ENCODE measurements at regions of chr14 and their contacts with region 1.

Region 1: GRCh38 chr14:101849125-101849524 is 87.6 kb downstream of the PPP2R5C start:
- DNase-seq: no peak
- H3K4me3 ChIP-seq: no peak overlapping the region
- H3K27ac ChIP-seq: no peak overlapping the region
- H3K27me3 ChIP-seq: no peaks in the 10 kb centered on the region
- CTCF ChIP-seq: no peak

Region 2: DNA sequence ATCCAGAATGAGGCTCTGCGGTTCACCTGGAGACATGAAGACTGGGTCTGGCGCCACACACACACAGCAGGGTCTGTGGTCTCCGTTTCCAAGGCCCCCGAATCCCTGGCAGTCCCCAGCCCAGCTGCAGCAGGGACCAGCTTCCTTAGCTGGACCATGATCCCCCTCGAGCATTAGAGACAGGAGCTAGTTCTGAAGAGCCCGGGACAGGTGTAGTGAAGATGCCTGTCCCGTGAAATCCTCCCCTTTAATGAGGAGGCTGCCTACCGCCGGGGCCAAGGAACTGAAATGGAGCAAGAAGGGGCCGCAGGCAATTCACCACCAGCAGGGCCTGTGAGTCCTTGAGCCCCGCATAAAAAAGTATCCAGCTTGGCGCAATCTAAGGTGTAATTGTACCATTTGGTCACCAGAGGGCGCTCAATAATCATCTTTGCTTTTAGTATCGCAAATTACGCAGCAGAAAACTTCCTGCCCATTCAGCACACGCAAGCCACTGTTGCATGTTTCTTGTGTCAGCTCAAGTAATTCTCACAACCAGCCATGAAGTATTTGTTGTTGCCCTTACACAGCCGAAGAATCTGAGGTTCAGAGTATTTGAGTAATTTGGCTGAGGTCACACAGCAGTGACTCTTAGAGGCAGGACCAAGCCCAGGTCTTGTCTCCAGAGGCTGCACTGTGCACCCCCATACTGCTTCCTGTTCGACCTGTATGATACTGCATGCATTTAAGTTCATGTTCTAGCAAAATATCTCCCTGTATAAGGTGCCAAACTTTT is 141.9 kb before region 1 on chr14:
- intact Hi-C with region 1: loop called in 1 of 2 experiments (anchors 5 kb)
- DNase-seq: peak in 3 of 10 donors; percentile 27 to 61 (median 52)
- H3K4me3 ChIP-seq: peak overlapping the region in 16 of 59 donors; percentile 6 to 38 (median 22)
- H3K27ac ChIP-seq: peak overlapping the region in 11 of 59 donors; percentile 10 to 72 (median 45)
- H3K27me3 ChIP-seq: peaks cover 0 to 26% (median 7%) of the 10 kb centered on the region in 45 donors
- CTCF ChIP-seq: peak; percentile 71 to 98 (median 91)

Region 3: DNA sequence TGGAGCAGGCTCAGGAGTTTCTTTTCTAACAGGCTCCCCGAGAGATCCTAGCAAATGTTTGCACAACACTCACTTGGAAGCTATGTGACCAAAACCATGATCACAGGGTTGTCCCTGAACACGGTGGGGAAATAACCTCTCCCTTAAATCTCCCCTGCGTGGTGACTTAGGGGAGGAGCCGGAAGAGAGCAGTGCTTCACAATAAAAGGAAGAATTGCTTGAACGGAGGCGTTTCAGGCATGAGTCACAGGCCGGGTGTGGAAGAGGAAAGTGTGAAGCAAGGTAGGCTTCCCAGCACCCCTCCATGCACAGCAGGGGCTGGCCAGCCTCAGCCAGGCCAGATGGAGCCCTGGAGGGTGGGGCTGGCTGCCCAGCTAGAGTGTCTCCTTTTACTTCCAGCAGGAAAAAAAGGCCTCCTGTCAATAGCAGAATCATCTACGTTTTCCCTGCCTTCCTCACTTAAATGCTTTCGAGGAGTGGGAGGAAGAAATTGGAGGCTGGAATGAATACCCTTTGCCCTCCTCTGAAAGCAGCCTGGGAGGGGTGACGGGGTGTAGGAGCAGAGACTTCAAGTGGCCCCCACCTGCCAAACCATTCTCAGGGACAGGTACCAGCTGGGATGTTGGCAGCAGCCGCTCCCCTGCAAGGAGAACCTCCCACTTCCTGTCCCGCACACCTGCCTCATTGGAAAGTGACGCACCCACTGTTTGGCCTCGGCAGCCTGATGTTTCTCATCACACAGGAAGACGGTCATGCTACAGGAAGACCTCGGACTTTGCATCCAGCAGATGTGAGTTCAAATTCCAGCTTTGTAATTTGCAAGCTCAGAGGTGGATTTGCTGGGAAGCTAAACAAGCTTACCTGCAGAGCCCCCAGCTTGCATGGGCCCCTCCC is 117.7 kb before region 1 on chr14:
- intact Hi-C with region 1: no loop called
- DNase-seq: peak in 7 of 10 donors; percentile 38 to 79 (median 56)
- H3K4me3 ChIP-seq: no peak overlapping the region
- H3K27ac ChIP-seq: peak overlapping the region in 24 of 59 donors; percentile 5 to 60 (median 41)
- H3K27me3 ChIP-seq: no peaks in the 10 kb centered on the region
- CTCF ChIP-seq: no peak

Measured in dorsolateral prefrontal cortex (tissue), 120 donors.